SK-N-SH (cell line): ENCODE measurements at regions of chr3 and their contacts with region 1.

Region 1: GRCh38 chr3:50205414-50206276 is 574 bp downstream of the SLC38A3 start:
- DNase-seq: peak; percentile 62
- H3K4me3 ChIP-seq: peak overlapping the region; percentile 47 to 48; a peak in 3 of 4 replicates
- H3K27ac ChIP-seq: no peak overlapping the region
- H3K4me1 ChIP-seq: peaks cover 0 to 11% of the 10 kb centered on the region in 2 experiments; a peak in 1 of 4 replicates
- H3K27me3 ChIP-seq: peaks cover 28% of the 10 kb centered on the region
- CTCF ChIP-seq: no peak
- EP300 ChIP-seq: no peak
- RAD21 ChIP-seq: no peak

Region 2: DNA sequence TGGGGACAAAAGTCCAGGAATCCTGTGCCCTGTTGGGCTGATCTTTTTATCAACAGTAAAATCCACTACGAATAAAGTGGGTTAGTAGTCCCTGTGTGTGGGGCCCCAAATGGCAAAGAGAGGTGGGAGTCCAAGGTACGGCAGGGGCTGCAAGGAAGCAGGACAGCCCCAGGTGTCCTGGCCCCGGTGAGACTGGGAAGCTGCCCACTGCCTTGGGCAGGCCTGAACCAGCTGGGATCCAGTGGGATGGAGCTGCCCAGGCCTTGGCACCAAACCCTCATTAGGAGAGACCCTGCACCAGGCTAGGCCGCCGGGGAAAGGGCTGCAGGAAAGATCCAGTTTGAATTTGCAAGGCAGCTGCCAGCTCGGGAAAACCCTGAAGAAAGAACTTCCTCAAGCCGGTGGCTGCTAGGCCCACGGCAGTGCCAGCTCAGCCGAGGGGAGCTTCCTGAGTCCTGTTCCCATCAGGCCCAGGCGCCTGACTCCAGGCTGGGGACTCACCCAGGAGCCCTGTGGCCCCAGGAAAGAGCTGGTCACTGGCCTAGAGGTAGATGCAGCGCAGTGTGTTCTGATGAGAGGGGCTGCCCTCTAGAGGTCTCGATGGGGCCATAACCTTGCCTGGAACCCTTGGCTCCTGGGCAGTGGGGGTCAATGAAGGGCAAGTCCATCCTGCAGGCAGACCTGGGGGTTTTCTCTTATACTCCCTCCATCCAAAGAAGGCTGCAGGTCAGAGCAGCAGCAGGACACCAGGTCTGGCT is 15.9 kb after region 1 on chr3:
- CTCF ChIA-PET with region 1: interaction called, 192 read pairs
- POLR2A ChIA-PET with region 1: interaction called, 3 read pairs
- DNase-seq: no peak
- H3K4me3 ChIP-seq: no peak overlapping the region
- H3K27ac ChIP-seq: no peak overlapping the region
- H3K4me1 ChIP-seq: no peaks in the 10 kb centered on the region; a peak in 1 of 4 replicates
- H3K27me3 ChIP-seq: peaks cover 7% of the 10 kb centered on the region; the same call in 1 of the 2 replicates
- CTCF ChIP-seq: no peak
- EP300 ChIP-seq: no peak
- RAD21 ChIP-seq: no peak